Activated CD4-positive, alpha-beta T cell treated with anti-CD3 and anti-CD28 coated beads, Interleukin-2, amount 10 ng/mL, durations not matched to agents 7 days and 5 days (primary cell): ENCODE measurements at regions of chr4 and their contacts with region 1.

Region 1: DNA sequence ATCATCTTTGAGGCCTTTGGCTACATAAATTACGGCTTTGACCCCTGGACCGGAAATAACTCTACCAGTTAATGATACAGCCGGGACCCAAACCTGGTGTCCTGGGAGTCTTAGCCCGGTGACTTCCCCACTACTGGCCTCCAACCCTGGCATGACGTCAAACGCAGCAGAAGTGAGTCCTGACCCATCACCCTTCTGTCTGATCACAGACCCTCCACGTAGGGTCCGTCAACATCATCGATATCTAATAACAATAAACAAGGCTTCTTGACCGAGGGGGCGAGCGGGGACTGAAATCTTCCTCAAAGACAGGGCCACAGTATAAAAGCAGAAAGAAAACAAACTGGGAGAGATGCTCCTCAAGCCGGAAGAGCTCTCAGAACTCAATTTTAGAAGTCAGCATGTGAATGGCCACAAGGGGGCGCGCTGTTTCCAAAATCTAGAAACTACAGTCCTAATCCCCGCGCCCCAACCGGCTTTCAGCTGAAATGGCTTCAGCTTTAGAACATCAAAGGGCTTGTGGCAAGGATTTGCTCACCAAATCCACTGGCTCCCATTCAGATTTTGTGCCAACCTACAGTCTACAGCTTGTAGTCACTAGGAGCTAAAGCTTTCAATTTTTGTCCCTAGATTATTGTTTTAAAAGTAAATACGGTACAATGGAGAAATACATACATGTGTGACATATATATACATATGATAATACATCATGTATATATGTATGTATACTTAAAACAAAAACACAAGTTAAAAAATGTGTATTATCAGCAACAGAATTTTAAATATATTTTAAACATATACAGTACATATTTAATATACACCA is 46.4 kb upstream of the ENPP6 start:
- DNase-seq: peak; percentile 97
- H3K4me3 Mint-ChIP-seq: no peak overlapping the region
- H3K27ac Mint-ChIP-seq: peak overlapping the region; percentile 21
- H3K4me1 Mint-ChIP-seq: peaks cover 44% of the 10 kb centered on the region
- H3K27me3 Mint-ChIP-seq: no peaks in the 10 kb centered on the region

Region 2: GRCh38 chr4:184237612-184238011 is 26.5 kb before region 1 on chr4:
- CTCF ChIA-PET with region 1: interaction called, 11 read pairs
- POLR2A ChIA-PET with region 1: no interaction called
- DNase-seq: peak; percentile 68
- H3K4me3 Mint-ChIP-seq: peak overlapping the region; percentile 28
- H3K27ac Mint-ChIP-seq: peak overlapping the region; percentile 70
- H3K4me1 Mint-ChIP-seq: peaks cover 26% of the 10 kb centered on the region
- H3K27me3 Mint-ChIP-seq: no peaks in the 10 kb centered on the region

Region 3: DNA sequence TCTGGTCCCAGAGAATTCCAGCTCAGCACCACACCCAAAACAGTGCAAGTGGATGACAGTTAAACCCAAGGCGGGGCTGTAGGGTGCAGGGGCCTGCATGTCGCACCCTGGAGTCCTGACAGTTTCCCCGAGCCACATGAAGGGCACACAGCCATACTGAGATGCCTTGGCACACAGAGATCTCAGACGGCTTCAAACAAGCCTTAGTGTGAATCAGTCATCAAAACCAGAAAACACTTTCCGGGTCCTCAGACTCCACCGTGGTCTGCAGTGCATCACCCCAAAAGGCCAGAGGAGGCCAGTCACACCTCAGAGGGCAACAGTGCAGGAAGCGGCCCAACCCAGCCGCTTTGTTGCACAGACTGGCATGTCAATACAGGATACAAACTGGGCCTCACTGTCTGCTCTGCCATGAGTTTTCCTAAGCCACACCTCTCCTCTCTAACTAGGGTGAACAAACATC is 18.2 kb after region 1 on chr4:
- CTCF ChIA-PET with region 1: interaction called, 38 read pairs
- POLR2A ChIA-PET with region 1: interaction called, 4 read pairs
- DNase-seq: peak; percentile 53
- H3K4me3 Mint-ChIP-seq: no peak overlapping the region
- H3K27ac Mint-ChIP-seq: peak overlapping the region; percentile 77
- H3K4me1 Mint-ChIP-seq: peaks cover 45% of the 10 kb centered on the region
- H3K27me3 Mint-ChIP-seq: no peaks in the 10 kb centered on the region

Region 4: GRCh38 chr4:184474263-184475095 is 210.4 kb after region 1 on chr4 and contains the start of gene IRF2:
- CTCF ChIA-PET with region 1: interaction called, 10 read pairs
- POLR2A ChIA-PET with region 1: interaction called, 3 read pairs
- DNase-seq: peak; percentile 98
- H3K4me3 Mint-ChIP-seq: peak within 1 kb of the TSS; percentile 99
- H3K27ac Mint-ChIP-seq: peak within 1 kb of the TSS; percentile 98
- H3K4me1 Mint-ChIP-seq: peaks cover 52% of the 10 kb centered on the region
- H3K27me3 Mint-ChIP-seq: no peaks in the 10 kb centered on the region
- total RNA-seq, gene IRF2: 82.1 to 84.3 TPM

Region 5: DNA sequence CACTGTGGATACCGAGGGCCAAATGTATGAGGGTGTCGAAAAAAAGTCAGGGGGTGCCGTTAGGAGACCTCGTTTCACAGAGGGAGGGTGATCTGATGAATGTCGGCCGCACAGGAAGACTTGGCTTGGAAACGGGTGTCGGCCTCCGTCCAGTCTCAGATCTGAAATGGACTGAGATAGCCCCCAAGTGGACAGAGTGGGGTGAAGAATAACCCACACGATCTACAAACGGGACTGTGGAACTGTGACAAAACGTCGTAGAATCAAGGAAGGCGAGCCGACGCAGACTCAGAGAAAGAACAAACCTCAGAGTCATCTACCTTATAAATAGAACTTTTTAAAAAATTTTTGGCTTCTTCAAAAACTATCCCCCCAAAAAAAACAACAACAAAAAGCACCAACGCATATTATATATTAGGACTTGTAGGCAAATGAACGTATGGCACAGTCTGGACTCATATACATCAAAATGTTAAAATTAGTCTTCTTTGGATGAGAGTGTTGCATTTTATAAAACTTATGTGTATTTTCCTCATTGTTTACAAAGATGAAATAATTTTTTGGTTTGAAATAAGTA is 274.0 kb after region 1 on chr4:
- CTCF ChIA-PET with region 1: interaction called, 10 read pairs
- POLR2A ChIA-PET with region 1: interaction called, 4 read pairs
- DNase-seq: peak; percentile 71
- H3K4me3 Mint-ChIP-seq: peak overlapping the region; percentile 91
- H3K27ac Mint-ChIP-seq: peak overlapping the region; percentile 99
- H3K4me1 Mint-ChIP-seq: peaks cover 45% of the 10 kb centered on the region
- H3K27me3 Mint-ChIP-seq: no peaks in the 10 kb centered on the region